ENCODE measurements at regions of chr1 and their contacts with region 1.

Region 1: DNA sequence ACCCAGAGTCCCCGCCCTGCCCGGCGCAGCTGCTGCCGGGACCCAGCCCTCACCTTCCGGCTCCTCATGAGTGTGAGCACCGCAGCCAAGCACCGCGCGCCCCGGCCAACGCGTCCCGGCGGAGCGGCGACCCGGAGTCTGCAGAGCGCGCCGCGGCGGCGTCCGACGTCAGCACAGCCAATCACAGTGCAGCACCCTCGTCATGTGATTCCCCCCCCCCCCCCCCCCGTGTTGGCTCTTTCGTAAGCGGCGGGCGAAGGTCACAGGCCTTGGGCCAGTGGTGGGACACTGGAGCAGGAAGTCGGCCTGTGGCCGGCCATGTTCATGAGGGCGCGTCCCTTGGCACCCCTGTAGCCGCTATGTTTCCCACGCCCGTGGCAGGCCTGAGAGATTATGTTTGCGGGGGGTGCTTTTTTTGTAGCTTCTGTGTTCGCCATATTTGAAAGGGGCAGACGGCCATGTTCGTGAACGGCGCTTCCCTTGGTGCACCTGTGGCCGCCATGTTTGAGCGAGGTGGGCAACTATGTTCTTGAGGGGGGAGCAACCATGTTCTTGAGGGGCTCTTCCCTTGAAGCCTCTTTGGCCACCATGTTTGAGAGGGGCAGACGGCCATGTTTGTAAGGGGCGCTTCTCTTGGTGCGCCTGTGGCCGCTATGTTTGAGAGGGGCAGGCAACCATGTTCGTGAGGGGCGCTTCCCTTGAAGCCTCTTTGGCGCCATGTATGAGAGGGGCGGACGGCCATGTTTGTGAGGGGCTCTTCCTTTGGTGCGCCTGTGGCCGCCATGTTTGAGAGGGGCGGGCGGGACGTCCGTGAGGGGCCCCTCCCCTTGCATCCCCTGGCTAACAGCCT is at the start of gene C1orf174:
- DNase-seq: peak; percentile 88 to 99 (median 93)
- ATAC-seq: peak; percentile 83
- H3K4me3 ChIP-seq: peak within 1 kb of the TSS; percentile 55 to 68
- H3K4me3 Mint-ChIP-seq: peak within 1 kb of the TSS; percentile 88
- H3K27ac ChIP-seq: peak within 1 kb of the TSS; percentile 69 to 97
- H3K27ac Mint-ChIP-seq: peak within 1 kb of the TSS; percentile 92
- H3K4me1 ChIP-seq: peaks cover 49% of the 10 kb centered on the region
- H3K4me1 Mint-ChIP-seq: peaks cover 55% of the 10 kb centered on the region
- H3K27me3 ChIP-seq: no peaks in the 10 kb centered on the region
- H3K27me3 Mint-ChIP-seq: no peaks in the 10 kb centered on the region
- CTCF ChIP-seq: no peak
- total RNA-seq, gene C1orf174: 19.1 to 20.9 TPM

Region 2: GRCh38 chr1:2586154-2587070 is 1313.9 kb before region 1 on chr1 and contains the start of gene PRXL2B:
- CTCF ChIA-PET with region 1: no interaction called
- POLR2A ChIA-PET with region 1: no interaction called
- intact Hi-C with region 1: loop called in 1 of 2 experiments (anchors 10 kb)
- DNase-seq: peak; percentile 94 to 99 (median 97)
- ATAC-seq: peak; percentile 69
- H3K4me3 ChIP-seq: peak within 1 kb of the TSS; percentile 79 to 95
- H3K4me3 Mint-ChIP-seq: peak within 1 kb of the TSS; percentile 93
- H3K27ac ChIP-seq: peak within 1 kb of the TSS; percentile 95 to 98
- H3K27ac Mint-ChIP-seq: peak within 1 kb of the TSS; percentile 99
- H3K4me1 ChIP-seq: peaks cover 37% of the 10 kb centered on the region
- H3K4me1 Mint-ChIP-seq: peaks cover 40% of the 10 kb centered on the region
- H3K27me3 ChIP-seq: no peaks in the 10 kb centered on the region
- H3K27me3 Mint-ChIP-seq: no peaks in the 10 kb centered on the region
- CTCF ChIP-seq: no peak
- total RNA-seq, gene PRXL2B: 13.5 to 15.9 TPM

Region 3: DNA sequence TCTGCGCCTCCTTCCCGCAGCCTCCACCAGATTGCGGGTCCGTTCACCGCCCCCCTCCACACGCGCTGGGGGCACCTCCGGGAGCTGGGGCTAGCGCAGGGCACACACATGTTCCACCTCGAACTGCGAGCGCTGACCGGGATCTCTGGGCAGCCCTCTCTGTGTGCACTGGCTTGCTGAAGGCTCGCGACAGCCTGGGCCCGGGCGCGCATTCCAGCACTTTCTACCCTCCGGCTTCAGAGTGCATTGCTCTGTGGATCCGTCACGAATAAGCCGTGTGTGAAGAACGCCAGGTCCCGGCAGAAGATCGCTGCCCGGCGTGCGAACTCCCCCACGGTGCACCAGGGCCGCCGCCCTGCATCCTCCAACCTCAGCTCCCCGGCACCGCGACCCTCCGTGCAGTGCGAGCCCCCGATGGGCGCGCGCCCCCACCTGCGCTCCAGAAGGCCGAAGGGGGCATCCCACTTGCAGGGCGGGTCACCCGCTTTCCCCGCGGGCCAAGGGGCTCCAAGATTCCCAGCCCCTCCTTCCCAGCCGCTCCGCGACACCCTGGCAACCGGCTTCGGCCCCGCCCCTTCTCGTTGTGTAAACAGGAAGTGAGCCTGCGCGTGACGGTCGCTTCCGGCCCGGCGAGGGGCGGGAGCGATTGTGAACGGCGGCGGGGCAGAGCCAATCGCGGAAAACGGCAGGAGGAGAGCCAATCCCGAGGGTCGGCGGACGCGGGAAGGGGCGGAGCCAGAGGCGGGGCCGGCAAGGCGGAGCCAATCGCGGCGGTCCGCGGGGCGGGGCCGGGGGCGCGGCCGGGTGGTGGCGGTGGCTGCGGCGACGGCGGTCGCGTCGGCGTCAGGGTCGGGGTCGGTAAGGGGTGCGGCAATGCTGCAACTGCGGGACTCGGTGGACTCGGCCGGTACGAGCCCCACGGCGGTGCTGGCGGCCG is 275.9 kb before region 1 on chr1 and contains the start of gene TPRG1L:
- CTCF ChIA-PET with region 1: no interaction called
- POLR2A ChIA-PET with region 1: no interaction called
- intact Hi-C with region 1: loop called in 1 of 2 experiments (anchors 1 kb)
- DNase-seq: peak; percentile 97 to 99 (median 98)
- ATAC-seq: peak; percentile 93
- H3K4me3 ChIP-seq: peak within 1 kb of the TSS; percentile 72 to 100
- H3K4me3 Mint-ChIP-seq: peak within 1 kb of the TSS; percentile 98
- H3K27ac ChIP-seq: peak within 1 kb of the TSS; percentile 61 to 89
- H3K27ac Mint-ChIP-seq: peak within 1 kb of the TSS; percentile 98
- H3K4me1 ChIP-seq: peaks cover 29% of the 10 kb centered on the region
- H3K4me1 Mint-ChIP-seq: peaks cover 40% of the 10 kb centered on the region
- H3K27me3 ChIP-seq: no peaks in the 10 kb centered on the region
- H3K27me3 Mint-ChIP-seq: no peaks in the 10 kb centered on the region
- CTCF ChIP-seq: no peak
- total RNA-seq, gene TPRG1L: 39.0 to 39.8 TPM

Region 4: GRCh38 chr1:3746830-3747521 is 153.4 kb before region 1 on chr1:
- CTCF ChIA-PET with region 1: no interaction called
- POLR2A ChIA-PET with region 1: no interaction called
- intact Hi-C with region 1: loop called in 1 of 2 experiments (anchors 1 kb)
- DNase-seq: peak; percentile 66 to 90 (median 86)
- ATAC-seq: peak; percentile 97
- H3K4me3 ChIP-seq: peak overlapping the region; percentile 51 to 63
- H3K4me3 Mint-ChIP-seq: peak overlapping the region; percentile 81
- H3K27ac ChIP-seq: peak overlapping the region; percentile 46 to 47
- H3K27ac Mint-ChIP-seq: peak overlapping the region; percentile 73
- H3K4me1 ChIP-seq: peaks cover 10% of the 10 kb centered on the region
- H3K4me1 Mint-ChIP-seq: peaks cover 27% of the 10 kb centered on the region
- H3K27me3 ChIP-seq: no peaks in the 10 kb centered on the region
- H3K27me3 Mint-ChIP-seq: no peaks in the 10 kb centered on the region
- CTCF ChIP-seq: no peak

Region 5: DNA sequence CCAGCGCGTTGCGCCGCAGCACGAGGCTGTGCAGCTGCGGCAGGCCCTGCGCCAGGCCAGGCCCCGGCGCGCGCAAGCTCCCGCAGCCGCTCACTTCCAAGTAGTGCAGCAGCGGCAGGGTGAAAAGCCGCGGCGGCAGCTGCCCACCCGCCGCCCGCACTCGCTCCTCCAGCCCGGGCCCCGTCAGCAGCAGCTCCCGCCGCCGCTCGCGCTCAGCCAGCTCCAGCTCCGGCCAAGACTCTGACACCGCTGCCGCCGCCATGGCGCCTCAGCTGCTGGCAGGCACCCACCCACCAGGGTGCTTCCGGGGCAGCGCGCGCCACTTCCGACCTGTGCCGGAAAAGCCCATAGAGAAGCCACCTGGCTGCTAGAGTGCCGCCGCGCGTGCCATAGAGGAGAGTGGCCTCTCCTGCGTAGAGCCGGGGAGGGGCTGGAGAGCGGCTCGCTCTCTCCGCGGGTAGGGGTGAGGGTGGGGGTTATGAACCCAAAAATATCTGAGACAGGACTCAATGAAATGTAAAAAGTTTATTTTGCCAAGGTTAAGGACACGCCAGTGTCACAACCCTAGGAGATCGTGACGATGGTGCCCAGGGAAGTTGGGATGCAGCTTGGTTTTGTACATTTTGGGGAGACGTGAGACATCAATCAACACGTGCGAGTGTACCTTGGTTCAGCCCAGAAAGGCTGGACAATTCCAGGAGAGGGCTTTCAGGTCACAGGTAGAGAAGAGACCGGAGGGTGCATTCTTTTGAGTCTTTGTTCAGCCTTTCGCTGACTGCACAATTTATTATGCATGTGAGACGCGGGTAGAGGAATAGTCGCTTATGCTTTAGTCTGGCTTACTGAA is 103.9 kb before region 1 on chr1 and contains the start of gene LRRC47:
- CTCF ChIA-PET with region 1: no interaction called
- POLR2A ChIA-PET with region 1: interaction called, 4 read pairs
- intact Hi-C with region 1: loop called in 1 of 2 experiments (anchors 1 kb)
- DNase-seq: peak; percentile 86 to 95 (median 94)
- ATAC-seq: peak; percentile 99
- H3K4me3 ChIP-seq: peak within 1 kb of the TSS; percentile 51 to 75
- H3K4me3 Mint-ChIP-seq: peak within 1 kb of the TSS; percentile 93
- H3K27ac ChIP-seq: peak within 1 kb of the TSS; percentile 49 to 62
- H3K27ac Mint-ChIP-seq: peak within 1 kb of the TSS; percentile 94
- H3K4me1 ChIP-seq: peaks cover 31% of the 10 kb centered on the region
- H3K4me1 Mint-ChIP-seq: peaks cover 44% of the 10 kb centered on the region
- H3K27me3 ChIP-seq: no peaks in the 10 kb centered on the region
- H3K27me3 Mint-ChIP-seq: peaks cover 14% of the 10 kb centered on the region
- CTCF ChIP-seq: no peak
- total RNA-seq, gene LRRC47: 31.8 to 36.3 TPM

Region 6: GRCh38 chr1:3864884-3865283 is 35.5 kb before region 1 on chr1:
- CTCF ChIA-PET with region 1: interaction called, 4 read pairs
- POLR2A ChIA-PET with region 1: no interaction called
- intact Hi-C with region 1: loop called in 1 of 2 experiments (anchors 2 kb)
- DNase-seq: no peak
- ATAC-seq: no peak
- H3K4me3 ChIP-seq: no peak overlapping the region
- H3K4me3 Mint-ChIP-seq: no peak overlapping the region
- H3K27ac ChIP-seq: no peak overlapping the region
- H3K27ac Mint-ChIP-seq: no peak overlapping the region
- H3K4me1 ChIP-seq: no peaks in the 10 kb centered on the region
- H3K4me1 Mint-ChIP-seq: peaks cover 4% of the 10 kb centered on the region
- H3K27me3 ChIP-seq: no peaks in the 10 kb centered on the region
- H3K27me3 Mint-ChIP-seq: no peaks in the 10 kb centered on the region
- CTCF ChIP-seq: no peak

Measured in CD8-positive, alpha-beta T cell (primary cell).